ENCODE measurements at regions of chr2 and their contacts with region 1.

Region 1: GRCh38 chr2:136327162-136327852 is 209.4 kb upstream of the CXCR4 start:
- DNase-seq: peak; percentile 93
- H3K4me3 Mint-ChIP-seq: peak overlapping the region; percentile 60
- H3K27ac Mint-ChIP-seq: peak overlapping the region; percentile 90
- H3K4me1 Mint-ChIP-seq: peaks cover 73% of the 10 kb centered on the region
- H3K27me3 Mint-ChIP-seq: no peaks in the 10 kb centered on the region

Region 2: GRCh38 chr2:135825550-135826176 is 501.6 kb before region 1 on chr2:
- CTCF ChIA-PET with region 1: no interaction called
- POLR2A ChIA-PET with region 1: no interaction called
- intact Hi-C with region 1: no loop called
- DNase-seq: no peak
- H3K4me3 Mint-ChIP-seq: no peak overlapping the region
- H3K27ac Mint-ChIP-seq: no peak overlapping the region
- H3K4me1 Mint-ChIP-seq: peaks cover 9% of the 10 kb centered on the region
- H3K27me3 Mint-ChIP-seq: no peaks in the 10 kb centered on the region

Region 3: GRCh38 chr2:135948642-135949355 is 378.5 kb before region 1 on chr2:
- CTCF ChIA-PET with region 1: no interaction called
- POLR2A ChIA-PET with region 1: interaction called, 3 read pairs
- intact Hi-C with region 1: loop called (anchors 2 kb)
- DNase-seq: peak; percentile 55
- H3K4me3 Mint-ChIP-seq: peak overlapping the region; percentile 53
- H3K27ac Mint-ChIP-seq: peak overlapping the region; percentile 87
- H3K4me1 Mint-ChIP-seq: peaks cover 64% of the 10 kb centered on the region
- H3K27me3 Mint-ChIP-seq: no peaks in the 10 kb centered on the region

Region 4: DNA sequence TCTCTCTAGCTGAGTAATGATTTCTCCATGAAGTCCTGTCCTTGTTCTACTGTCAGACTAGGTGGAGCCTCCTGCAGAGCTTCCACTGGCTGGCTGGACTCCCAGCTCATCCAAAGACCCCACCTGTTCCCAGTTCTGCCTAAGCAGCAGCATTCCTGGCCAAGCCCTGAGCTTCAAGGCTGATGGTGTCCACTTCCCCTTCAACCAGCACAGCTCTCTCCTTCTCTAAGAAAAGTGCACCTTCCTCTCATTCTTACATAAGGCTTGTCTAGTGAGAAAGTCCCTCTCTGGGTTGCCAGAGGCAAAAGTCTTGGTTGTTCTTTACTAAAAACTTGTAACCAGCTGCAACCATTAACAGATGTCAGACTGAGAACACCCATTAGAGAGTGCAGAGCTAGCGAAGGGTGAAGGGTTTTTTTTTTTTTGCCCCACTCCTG is 268.3 kb before region 1 on chr2:
- CTCF ChIA-PET with region 1: no interaction called
- POLR2A ChIA-PET with region 1: interaction called, 6 read pairs
- intact Hi-C with region 1: loop called (anchors 1 kb)
- DNase-seq: no peak
- H3K4me3 Mint-ChIP-seq: no peak overlapping the region
- H3K27ac Mint-ChIP-seq: no peak overlapping the region
- H3K4me1 Mint-ChIP-seq: peaks cover 63% of the 10 kb centered on the region
- H3K27me3 Mint-ChIP-seq: no peaks in the 10 kb centered on the region

Region 5: DNA sequence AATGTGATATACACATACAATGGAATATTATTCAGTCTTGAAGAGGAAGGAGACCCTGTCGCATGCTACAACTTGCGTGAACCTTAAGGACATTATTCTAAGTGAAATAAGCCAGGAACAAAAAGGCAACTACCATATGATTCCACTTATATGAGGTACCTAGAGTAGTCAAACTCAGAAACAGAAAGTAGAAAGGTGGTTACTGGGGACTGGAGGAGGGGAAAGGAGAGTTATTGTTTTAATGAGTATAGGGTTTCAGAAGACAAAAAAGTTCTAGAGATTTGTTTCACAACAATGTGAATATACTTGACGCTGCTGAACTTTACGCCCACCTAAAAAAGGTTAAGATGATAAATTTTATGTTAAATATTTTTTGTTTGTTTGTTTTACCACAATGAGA is 256.4 kb before region 1 on chr2:
- CTCF ChIA-PET with region 1: no interaction called
- POLR2A ChIA-PET with region 1: no interaction called
- intact Hi-C with region 1: no loop called
- DNase-seq: no peak
- H3K4me3 Mint-ChIP-seq: no peak overlapping the region
- H3K27ac Mint-ChIP-seq: no peak overlapping the region
- H3K4me1 Mint-ChIP-seq: peaks cover 32% of the 10 kb centered on the region
- H3K27me3 Mint-ChIP-seq: no peaks in the 10 kb centered on the region

Region 6: GRCh38 chr2:136238286-136239078 is 88.8 kb before region 1 on chr2:
- CTCF ChIA-PET with region 1: interaction called, 4 read pairs
- POLR2A ChIA-PET with region 1: interaction called, 9 read pairs
- intact Hi-C with region 1: loop called (anchors 1 kb)
- DNase-seq: peak; percentile 61
- H3K4me3 Mint-ChIP-seq: no peak overlapping the region
- H3K27ac Mint-ChIP-seq: peak overlapping the region; percentile 93
- H3K4me1 Mint-ChIP-seq: peaks cover 64% of the 10 kb centered on the region
- H3K27me3 Mint-ChIP-seq: no peaks in the 10 kb centered on the region

Region 7: GRCh38 chr2:136310797-136311603 is 16.3 kb before region 1 on chr2:
- CTCF ChIA-PET with region 1: interaction called, 5 read pairs
- POLR2A ChIA-PET with region 1: interaction called, 22 read pairs
- intact Hi-C with region 1: loop called (anchors 1 kb)
- DNase-seq: peak; percentile 51
- H3K4me3 Mint-ChIP-seq: no peak overlapping the region
- H3K27ac Mint-ChIP-seq: peak overlapping the region; percentile 92
- H3K4me1 Mint-ChIP-seq: peaks cover 34% of the 10 kb centered on the region
- H3K27me3 Mint-ChIP-seq: no peaks in the 10 kb centered on the region

Region 8: GRCh38 chr2:136378712-136379595 is 51.6 kb after region 1 on chr2:
- CTCF ChIA-PET with region 1: interaction called, 5 read pairs
- POLR2A ChIA-PET with region 1: interaction called, 25 read pairs
- intact Hi-C with region 1: loop called (anchors 1 kb)
- DNase-seq: peak; percentile 88
- H3K4me3 Mint-ChIP-seq: no peak overlapping the region
- H3K27ac Mint-ChIP-seq: peak overlapping the region; percentile 44
- H3K4me1 Mint-ChIP-seq: peaks cover 87% of the 10 kb centered on the region
- H3K27me3 Mint-ChIP-seq: no peaks in the 10 kb centered on the region

Region 9: DNA sequence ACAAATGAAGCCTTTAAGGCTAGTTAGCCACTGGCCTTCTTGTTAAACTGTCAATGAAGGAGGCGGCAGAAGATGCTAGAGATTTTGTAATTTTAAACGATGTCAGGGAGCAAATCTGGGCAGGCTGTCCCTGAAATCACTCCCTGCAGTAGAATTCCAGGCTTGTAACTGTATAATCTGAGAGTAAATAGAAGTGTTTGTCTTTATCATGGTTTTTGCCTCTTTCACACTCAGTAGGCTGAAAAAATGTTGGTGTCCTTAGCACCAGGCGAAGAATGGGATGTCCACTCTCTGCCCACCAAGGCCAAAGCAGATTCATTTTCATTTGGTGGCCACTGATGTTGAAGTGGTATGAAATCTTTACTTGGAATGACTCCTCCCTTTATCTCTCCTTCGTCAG is 301.2 kb after region 1 on chr2:
- CTCF ChIA-PET with region 1: no interaction called
- POLR2A ChIA-PET with region 1: no interaction called
- intact Hi-C with region 1: no loop called
- DNase-seq: no peak
- H3K4me3 Mint-ChIP-seq: no peak overlapping the region
- H3K27ac Mint-ChIP-seq: no peak overlapping the region
- H3K4me1 Mint-ChIP-seq: no peaks in the 10 kb centered on the region
- H3K27me3 Mint-ChIP-seq: peaks cover 2% of the 10 kb centered on the region

Measured in activated CD4-positive, alpha-beta memory T cell treated with anti-CD3 and anti-CD28 coated beads for 36 hours (primary cell).